ENCODE measurements at regions of chr7 and their contacts with region 1.

Region 1: GRCh38 chr7:128322040-128322643 is 21.6 kb downstream of the RBM28 start:
- DNase-seq: peak; percentile 18
- H3K4me3 Mint-ChIP-seq: no peak overlapping the region
- H3K27ac Mint-ChIP-seq: no peak overlapping the region
- H3K4me1 Mint-ChIP-seq: no peaks in the 10 kb centered on the region
- H3K27me3 Mint-ChIP-seq: no peaks in the 10 kb centered on the region
- CTCF ChIP-seq: no peak

Region 2: GRCh38 chr7:128221929-128222403 is 100.2 kb before region 1 on chr7:
- CTCF ChIA-PET with region 1: no interaction called
- intact Hi-C with region 1: loop called (anchors 5 kb)
- DNase-seq: peak; percentile 60
- H3K4me3 Mint-ChIP-seq: no peak overlapping the region
- H3K27ac Mint-ChIP-seq: no peak overlapping the region
- H3K4me1 Mint-ChIP-seq: peaks cover 15% of the 10 kb centered on the region
- H3K27me3 Mint-ChIP-seq: peaks cover 59% of the 10 kb centered on the region
- CTCF ChIP-seq: no peak

Measured in Calu3 (cell line).